ENCODE measurements at regions of chrX and their contacts with region 1.

Region 1: GRCh38 chrX:22268706-22269105 is 4.0 kb upstream of the CBLL2 start:
- DNase-seq: no peak
- ATAC-seq: no peak
- H3K4me3 ChIP-seq: no peak overlapping the region
- H3K4me3 Mint-ChIP-seq: no peak overlapping the region
- H3K27ac ChIP-seq: no peak overlapping the region
- H3K27ac Mint-ChIP-seq: no peak overlapping the region
- H3K4me1 ChIP-seq: no peaks in the 10 kb centered on the region
- H3K4me1 Mint-ChIP-seq: no peaks in the 10 kb centered on the region
- H3K27me3 ChIP-seq: no peaks in the 10 kb centered on the region
- H3K27me3 Mint-ChIP-seq: peaks cover 0 to 4% of the 10 kb centered on the region in 2 donors

Region 2: DNA sequence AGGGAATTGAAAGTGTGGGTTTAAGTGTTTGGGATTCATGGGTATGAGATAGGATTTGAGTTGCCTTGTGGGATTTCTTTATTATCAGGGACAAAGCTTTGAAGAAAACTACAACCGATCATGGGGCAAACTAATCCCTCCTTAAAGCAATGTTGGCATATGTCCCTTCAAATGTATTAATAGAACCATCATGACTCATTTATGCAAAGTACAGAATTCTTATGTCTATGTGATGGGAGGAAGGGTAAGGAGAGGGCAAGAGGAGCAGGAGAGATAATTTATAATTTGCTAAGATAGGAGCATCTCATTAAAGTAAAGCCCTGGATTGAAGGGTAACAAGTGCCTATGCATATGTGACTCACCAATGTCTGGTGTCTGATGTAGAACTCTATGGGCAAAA is 142.4 kb before region 1 on chrX:
- CTCF ChIA-PET with region 1: no interaction called
- POLR2A ChIA-PET with region 1: no interaction called
- DNase-seq: no peak
- ATAC-seq: no peak
- H3K4me3 ChIP-seq: no peak overlapping the region
- H3K4me3 Mint-ChIP-seq: no peak overlapping the region
- H3K27ac ChIP-seq: no peak overlapping the region
- H3K27ac Mint-ChIP-seq: no peak overlapping the region
- H3K4me1 ChIP-seq: no peaks in the 10 kb centered on the region
- H3K4me1 Mint-ChIP-seq: no peaks in the 10 kb centered on the region
- H3K27me3 ChIP-seq: no peaks in the 10 kb centered on the region
- H3K27me3 Mint-ChIP-seq: peaks cover 0 to 24% of the 10 kb centered on the region in 2 donors

Region 3: DNA sequence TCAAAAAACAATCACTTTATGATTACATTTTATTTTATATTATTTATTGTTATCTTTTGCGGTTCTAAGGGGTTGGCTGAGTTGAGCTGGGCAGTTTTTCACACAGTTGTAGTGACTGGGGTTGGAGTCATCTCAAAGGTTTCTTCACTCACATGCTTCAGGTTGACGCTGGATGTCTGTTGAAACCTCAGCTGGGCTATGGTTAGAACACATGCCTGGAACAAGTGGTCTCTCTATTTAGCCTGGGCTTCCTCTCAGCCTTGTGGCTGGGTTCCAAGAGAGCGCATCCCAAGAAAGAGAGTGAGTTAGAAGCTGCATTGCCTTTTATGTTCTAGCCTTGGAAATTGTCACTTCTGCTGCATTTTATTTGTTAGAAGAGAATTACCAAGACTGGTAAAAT is 91.4 kb after region 1 on chrX:
- CTCF ChIA-PET with region 1: no interaction called
- POLR2A ChIA-PET with region 1: interaction called in 1 of 2 experiments, 10 read pairs
- DNase-seq: no peak
- ATAC-seq: no peak
- H3K4me3 ChIP-seq: no peak overlapping the region
- H3K4me3 Mint-ChIP-seq: no peak overlapping the region
- H3K27ac ChIP-seq: no peak overlapping the region
- H3K27ac Mint-ChIP-seq: no peak overlapping the region
- H3K4me1 ChIP-seq: no peaks in the 10 kb centered on the region
- H3K4me1 Mint-ChIP-seq: no peaks in the 10 kb centered on the region
- H3K27me3 ChIP-seq: no peaks in the 10 kb centered on the region
- H3K27me3 Mint-ChIP-seq: peaks cover 0 to 10% of the 10 kb centered on the region in 2 donors